ENCODE measurements at regions of chr7 and their contacts with region 1.

Region 1: GRCh38 chr7:134750083-134751062 is 29.1 kb upstream of the CALD1 start:
- DNase-seq: peak; percentile 51
- ATAC-seq: peak; percentile 99
- H3K4me3 ChIP-seq: no peak overlapping the region
- H3K27ac ChIP-seq: no peak overlapping the region
- H3K4me1 ChIP-seq: no peaks in the 10 kb centered on the region
- H3K27me3 ChIP-seq: no peaks in the 10 kb centered on the region
- CTCF ChIP-seq: peak; percentile 41 to 89 (median 89); a peak in 5 of 6 replicates
- POLR2A ChIP-seq: no peak
- RAD21 ChIP-seq: peak; percentile 51

Region 2: GRCh38 chr7:134954197-134955082 is 204.1 kb after region 1 on chr7:
- CTCF ChIA-PET with region 1: no interaction called
- POLR2A ChIA-PET with region 1: no interaction called
- RAD21 ChIA-PET with region 1: no interaction called
- intact Hi-C with region 1: loop called (anchors 10 kb)
- DNase-seq: peak; percentile 12
- ATAC-seq: no peak
- H3K4me3 ChIP-seq: no peak overlapping the region
- H3K27ac ChIP-seq: no peak overlapping the region
- H3K4me1 ChIP-seq: no peaks in the 10 kb centered on the region
- H3K27me3 ChIP-seq: no peaks in the 10 kb centered on the region
- CTCF ChIP-seq: peak; percentile 36 to 74 (median 66); a peak in 5 of 6 replicates
- POLR2A ChIP-seq: no peak
- RAD21 ChIP-seq: peak; percentile 77

Measured in HCT116 (cell line).